Heart right ventricle (tissue), 16 donors: ENCODE measurements at regions of chr3 and their contacts with region 1.

Region 1: GRCh38 chr3:188111002-188111584 is 42.9 kb upstream of the LPP start:
- DNase-seq: peak in 1 of 2 donors; percentile 18
- ATAC-seq: peak; percentile 52 to 94 (median 84)
- H3K4me3 ChIP-seq: no peak overlapping the region
- H3K27ac ChIP-seq: peak overlapping the region in 7 of 10 donors; percentile 1 to 59 (median 43)
- H3K4me1 ChIP-seq: peaks cover 0 to 19% (median 3%) of the 10 kb centered on the region in 9 donors
- H3K27me3 ChIP-seq: no peaks in the 10 kb centered on the region
- CTCF ChIP-seq: no peak

Region 2: DNA sequence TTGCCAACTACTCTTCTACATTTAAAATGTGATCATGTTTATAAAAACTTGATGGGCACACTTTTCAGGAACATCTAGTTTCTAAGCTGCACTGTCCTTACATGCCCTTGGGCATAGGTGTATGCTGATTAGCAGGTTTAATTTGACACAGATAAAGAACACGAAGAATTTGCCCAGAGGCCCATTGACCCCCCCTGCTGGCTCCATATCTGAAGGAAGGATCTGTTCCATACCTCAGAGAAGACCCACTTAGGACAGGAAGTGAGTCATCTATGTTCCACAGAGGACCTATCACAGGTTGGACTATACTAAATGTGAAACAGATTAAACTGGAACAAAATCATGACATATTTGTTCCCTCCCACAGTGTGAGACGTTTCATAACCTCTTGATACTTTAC is 50.0 kb before region 1 on chr3:
- intact Hi-C with region 1: no loop called
- DNase-seq: no peak
- ATAC-seq: peak in 3 of 8 donors; percentile 22 to 44 (median 27)
- H3K4me3 ChIP-seq: no peak overlapping the region
- H3K27ac ChIP-seq: no peak overlapping the region
- H3K4me1 ChIP-seq: peaks cover 0 to 26% (median 9%) of the 10 kb centered on the region in 9 donors
- H3K27me3 ChIP-seq: no peaks in the 10 kb centered on the region
- CTCF ChIP-seq: no peak

Region 3: GRCh38 chr3:188185717-188186251 is 74.7 kb after region 1 on chr3:
- intact Hi-C with region 1: loop called in 1 of 10 experiments (anchors 2 kb)
- DNase-seq: no peak
- ATAC-seq: peak; percentile 34 to 80 (median 62)
- H3K4me3 ChIP-seq: no peak overlapping the region
- H3K27ac ChIP-seq: peak overlapping the region; percentile 46 to 88 (median 76)
- H3K4me1 ChIP-seq: peaks cover 0 to 88% (median 57%) of the 10 kb centered on the region in 9 donors
- H3K27me3 ChIP-seq: no peaks in the 10 kb centered on the region
- CTCF ChIP-seq: no peak